Sciatic nerve (tissue), 2 donors: ENCODE measurements at regions of chr2 and their contacts with region 1.

Region 1: GRCh38 chr2:6602471-6602870 is 263.2 kb downstream of the CMPK2 start:
- DNase-seq: no peak
- ATAC-seq: no peak

Region 2: DNA sequence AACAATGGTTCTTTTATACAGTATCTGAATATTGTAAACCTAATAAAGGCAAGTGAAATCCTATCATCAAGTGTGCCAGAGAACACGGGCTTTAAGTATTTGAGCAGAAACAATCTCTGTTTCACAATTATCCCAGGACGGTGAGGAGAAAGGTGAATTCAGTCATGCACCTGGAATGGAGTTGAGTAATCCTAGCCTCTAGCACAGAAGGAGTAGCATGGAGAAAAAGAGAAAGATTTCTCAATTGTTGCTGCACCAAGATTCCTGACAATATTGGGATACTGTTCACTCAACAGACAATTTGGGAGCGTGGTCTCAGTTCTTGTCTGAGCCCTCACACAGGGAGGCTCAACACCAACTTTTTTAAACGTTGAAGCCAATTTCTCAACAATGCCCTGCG is 399.7 kb before region 1 on chr2:
- intact Hi-C with region 1: loop called (anchors 5 kb)
- DNase-seq: no peak
- ATAC-seq: no peak